Activated CD4-positive, alpha-beta T cell treated with anti-CD3 and anti-CD28 coated beads for 36 hours (primary cell): ENCODE measurements at regions of chr18 and their contacts with region 1.

Region 1: GRCh38 chr18:8045884-8046281 is 478.8 kb downstream of the PTPRM start:
- DNase-seq: peak; percentile 83
- ATAC-seq: peak; percentile 87
- H3K4me3 Mint-ChIP-seq: no peak overlapping the region
- H3K27ac Mint-ChIP-seq: peak overlapping the region; percentile 87
- H3K4me1 Mint-ChIP-seq: peaks cover 40% of the 10 kb centered on the region
- H3K27me3 Mint-ChIP-seq: no peaks in the 10 kb centered on the region

Region 2: DNA sequence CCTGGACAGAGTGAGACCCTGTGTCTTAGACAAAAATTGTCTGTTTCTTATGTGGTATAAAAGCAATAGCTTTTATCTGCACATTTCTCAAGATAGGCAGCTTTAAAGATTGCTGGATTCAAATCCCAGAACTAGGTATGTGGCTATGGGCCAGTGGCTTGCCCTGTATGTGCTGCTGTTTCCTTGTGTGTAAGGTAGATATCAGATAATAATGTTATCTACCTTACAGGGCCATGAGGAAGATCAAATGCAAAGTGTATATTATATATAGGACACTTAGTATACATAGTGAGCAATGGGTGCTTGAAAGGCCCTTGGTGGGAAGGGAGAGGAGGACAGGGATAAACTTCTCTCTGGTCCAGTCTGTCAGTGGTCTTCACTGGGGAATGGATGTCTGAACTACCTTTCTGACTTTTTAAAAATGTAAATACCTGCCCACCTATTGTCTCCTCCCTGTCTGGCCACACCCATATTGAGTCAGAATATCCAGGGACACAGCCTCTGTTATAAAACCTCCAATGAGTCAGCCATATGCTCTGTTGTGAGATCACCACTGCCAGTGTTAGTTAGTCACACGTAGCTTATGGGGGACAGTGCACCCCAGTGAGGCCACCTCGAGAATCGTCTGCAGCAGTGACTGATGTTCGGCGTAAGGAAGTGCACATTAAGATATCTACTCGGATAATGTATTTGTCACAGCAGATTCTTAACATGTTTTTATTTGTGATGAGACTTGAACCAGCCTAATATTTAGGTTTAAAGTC is 95.3 kb before region 1 on chr18:
- CTCF ChIA-PET with region 1: no interaction called
- POLR2A ChIA-PET with region 1: no interaction called
- intact Hi-C with region 1: loop called in 1 of 2 experiments (anchors 5 kb)
- DNase-seq: peak; percentile 55
- ATAC-seq: peak; percentile 84
- H3K4me3 Mint-ChIP-seq: no peak overlapping the region
- H3K27ac Mint-ChIP-seq: peak overlapping the region; percentile 56
- H3K4me1 Mint-ChIP-seq: peaks cover 45% of the 10 kb centered on the region
- H3K27me3 Mint-ChIP-seq: no peaks in the 10 kb centered on the region

Region 3: GRCh38 chr18:7958081-7958896 is 87.6 kb before region 1 on chr18:
- CTCF ChIA-PET with region 1: no interaction called
- POLR2A ChIA-PET with region 1: no interaction called
- intact Hi-C with region 1: loop called (anchors 1 to 5 kb)
- DNase-seq: no peak
- ATAC-seq: peak; percentile 76
- H3K4me3 Mint-ChIP-seq: peak overlapping the region; percentile 10
- H3K27ac Mint-ChIP-seq: peak overlapping the region; percentile 88
- H3K4me1 Mint-ChIP-seq: peaks cover 53% of the 10 kb centered on the region
- H3K27me3 Mint-ChIP-seq: no peaks in the 10 kb centered on the region

Region 4: GRCh38 chr18:8003878-8004675 is 41.8 kb before region 1 on chr18:
- CTCF ChIA-PET with region 1: no interaction called
- POLR2A ChIA-PET with region 1: no interaction called
- intact Hi-C with region 1: no loop called
- DNase-seq: no peak
- ATAC-seq: no peak
- H3K4me3 Mint-ChIP-seq: no peak overlapping the region
- H3K27ac Mint-ChIP-seq: no peak overlapping the region
- H3K4me1 Mint-ChIP-seq: no peaks in the 10 kb centered on the region
- H3K27me3 Mint-ChIP-seq: no peaks in the 10 kb centered on the region